CD8-positive, alpha-beta memory T cell (primary cell): ENCODE measurements at regions of chr7 and their contacts with region 1.

Region 1: GRCh38 chr7:92833024-92833765 is 3.2 kb downstream of the CDK6 start:
- DNase-seq: peak; percentile 80 to 90 (median 82)
- H3K4me3 ChIP-seq: peak overlapping the region; percentile 81
- H3K4me3 Mint-ChIP-seq: peak overlapping the region; percentile 94 to 100 (median 97)
- H3K27ac ChIP-seq: peak overlapping the region; percentile 73
- H3K27ac Mint-ChIP-seq: peak overlapping the region; percentile 65 to 98 (median 94)
- H3K4me1 ChIP-seq: peaks cover 39% of the 10 kb centered on the region
- H3K4me1 Mint-ChIP-seq: peaks cover 47 to 61% (median 57%) of the 10 kb centered on the region in 3 donors
- H3K27me3 ChIP-seq: no peaks in the 10 kb centered on the region
- H3K27me3 Mint-ChIP-seq: no peaks in the 10 kb centered on the region

Region 2: DNA sequence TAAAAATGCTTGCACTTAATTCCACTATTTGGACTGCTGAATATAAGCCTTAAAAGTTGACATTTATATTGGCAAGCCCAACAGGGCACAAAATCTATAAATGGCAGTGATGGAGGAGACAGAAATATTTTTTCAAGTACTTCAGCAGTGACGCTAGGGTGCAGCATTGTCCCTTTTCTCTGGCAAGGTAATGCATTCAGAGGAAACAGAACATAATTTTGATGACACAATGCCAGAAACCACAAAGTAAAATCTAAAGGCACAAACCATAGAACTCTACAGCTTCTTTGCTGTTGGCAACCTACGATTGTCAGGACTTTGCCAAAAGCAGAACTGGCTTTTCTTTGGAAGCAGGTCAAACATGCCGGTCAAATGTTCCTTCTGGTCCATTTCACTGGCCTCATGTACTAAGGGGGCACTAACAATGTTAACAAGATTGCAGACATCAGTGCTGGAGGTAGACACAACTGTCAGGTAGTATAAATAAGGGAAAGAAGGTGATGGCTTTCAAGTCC is 212.1 kb before region 1 on chr7:
- CTCF ChIA-PET with region 1: interaction called, 45 read pairs
- POLR2A ChIA-PET with region 1: interaction called, 3 read pairs
- DNase-seq: peak; percentile 61 to 82 (median 67)
- H3K4me3 ChIP-seq: no peak overlapping the region
- H3K4me3 Mint-ChIP-seq: peak overlapping the region in 1 of 7 donors; percentile 15
- H3K27ac ChIP-seq: no peak overlapping the region
- H3K27ac Mint-ChIP-seq: peak overlapping the region; percentile 1 to 96 (median 81)
- H3K4me1 ChIP-seq: peaks cover 26% of the 10 kb centered on the region
- H3K4me1 Mint-ChIP-seq: peaks cover 17 to 39% (median 36%) of the 10 kb centered on the region in 3 donors
- H3K27me3 ChIP-seq: no peaks in the 10 kb centered on the region
- H3K27me3 Mint-ChIP-seq: no peaks in the 10 kb centered on the region

Region 3: GRCh38 chr7:92691578-92691977 is 141.6 kb before region 1 on chr7:
- CTCF ChIA-PET with region 1: interaction called, 30 read pairs
- POLR2A ChIA-PET with region 1: no interaction called
- DNase-seq: peak in 2 of 5 donors; percentile 23 to 26
- H3K4me3 ChIP-seq: no peak overlapping the region
- H3K4me3 Mint-ChIP-seq: no peak overlapping the region
- H3K27ac ChIP-seq: no peak overlapping the region
- H3K27ac Mint-ChIP-seq: peak overlapping the region in 6 of 8 donors; percentile 0 to 71 (median 18)
- H3K4me1 ChIP-seq: peaks cover 20% of the 10 kb centered on the region
- H3K4me1 Mint-ChIP-seq: peaks cover 27 to 56% (median 52%) of the 10 kb centered on the region in 3 donors
- H3K27me3 ChIP-seq: no peaks in the 10 kb centered on the region
- H3K27me3 Mint-ChIP-seq: no peaks in the 10 kb centered on the region

Region 4: DNA sequence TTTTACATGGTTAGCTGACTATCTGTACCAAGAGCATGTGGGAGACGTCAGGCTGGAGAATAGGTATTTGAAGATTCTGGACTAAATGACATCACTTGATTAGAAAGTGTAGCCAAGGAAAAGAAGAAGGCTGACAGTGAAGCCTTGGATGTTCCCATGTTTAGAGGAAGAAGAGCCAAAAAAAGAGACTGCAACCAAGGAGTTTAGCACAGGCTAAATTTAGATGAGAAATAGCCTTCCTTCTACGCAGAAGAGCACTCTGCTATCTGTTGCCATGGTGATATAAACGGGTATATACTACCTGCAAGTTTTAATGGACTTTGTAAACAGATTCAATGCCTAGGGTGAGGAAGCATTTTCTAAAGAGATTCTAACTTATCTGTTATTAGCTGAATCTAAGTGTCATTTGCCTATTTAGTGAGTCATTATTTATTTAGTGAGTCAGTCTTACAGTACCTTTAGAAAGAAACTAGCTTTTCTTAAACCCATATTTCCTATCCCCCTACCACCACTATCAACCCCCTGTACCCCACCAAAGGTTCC is 66.7 kb before region 1 on chr7:
- CTCF ChIA-PET with region 1: interaction called, 10 read pairs
- POLR2A ChIA-PET with region 1: no interaction called
- DNase-seq: no peak
- H3K4me3 ChIP-seq: no peak overlapping the region
- H3K4me3 Mint-ChIP-seq: no peak overlapping the region
- H3K27ac ChIP-seq: no peak overlapping the region
- H3K27ac Mint-ChIP-seq: peak overlapping the region in 1 of 8 donors; percentile 23
- H3K4me1 ChIP-seq: no peaks in the 10 kb centered on the region
- H3K4me1 Mint-ChIP-seq: peaks cover 25 to 49% (median 47%) of the 10 kb centered on the region in 3 donors
- H3K27me3 ChIP-seq: no peaks in the 10 kb centered on the region
- H3K27me3 Mint-ChIP-seq: no peaks in the 10 kb centered on the region

Region 5: DNA sequence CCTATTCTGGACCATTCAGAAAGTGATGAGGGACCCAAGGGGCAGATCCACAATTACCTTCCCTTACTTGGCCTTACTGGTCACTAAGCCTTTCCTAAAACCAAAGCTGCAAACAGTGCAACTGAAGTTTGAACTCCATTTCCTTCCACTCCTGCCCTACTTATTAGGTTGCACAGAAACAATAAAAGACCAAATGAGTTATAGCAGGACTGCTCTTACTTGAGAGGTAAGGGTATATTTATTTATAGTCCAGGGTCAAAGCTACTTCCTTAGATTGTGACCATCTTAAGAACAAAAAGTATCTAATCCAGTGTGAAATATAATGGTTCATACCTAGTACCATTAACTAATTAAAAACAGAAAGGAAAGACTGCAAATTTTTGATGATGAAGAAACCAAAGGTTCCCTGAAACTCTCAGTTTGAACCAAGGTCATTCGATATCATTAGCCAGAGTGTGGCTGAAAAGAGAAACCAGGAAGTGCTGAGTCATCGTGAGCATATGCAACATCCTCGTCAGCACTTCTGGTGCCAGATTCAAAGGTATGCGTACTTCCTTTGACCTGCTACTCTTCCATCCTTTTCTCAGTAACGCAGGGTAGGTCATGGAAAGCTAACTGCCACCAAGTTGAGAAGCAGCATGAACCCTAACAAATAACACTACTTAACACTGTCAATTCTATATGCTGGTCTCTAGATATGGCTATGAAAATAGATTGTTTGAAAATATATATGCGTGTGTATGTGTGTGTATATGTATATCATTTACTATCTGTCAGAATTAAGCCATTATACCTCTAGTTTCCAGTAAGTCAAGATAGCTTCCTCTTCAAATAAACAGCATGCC is 23.6 kb before region 1 on chr7:
- CTCF ChIA-PET with region 1: interaction called, 46 read pairs
- POLR2A ChIA-PET with region 1: interaction called, 6 read pairs
- DNase-seq: peak; percentile 11 to 71 (median 44)
- H3K4me3 ChIP-seq: peak overlapping the region; percentile 24
- H3K4me3 Mint-ChIP-seq: peak overlapping the region; percentile 19 to 83 (median 72)
- H3K27ac ChIP-seq: peak overlapping the region; percentile 49
- H3K27ac Mint-ChIP-seq: peak overlapping the region; percentile 43 to 96 (median 86)
- H3K4me1 ChIP-seq: peaks cover 28% of the 10 kb centered on the region
- H3K4me1 Mint-ChIP-seq: peaks cover 43 to 63% (median 61%) of the 10 kb centered on the region in 3 donors
- H3K27me3 ChIP-seq: no peaks in the 10 kb centered on the region
- H3K27me3 Mint-ChIP-seq: no peaks in the 10 kb centered on the region

Region 6: DNA sequence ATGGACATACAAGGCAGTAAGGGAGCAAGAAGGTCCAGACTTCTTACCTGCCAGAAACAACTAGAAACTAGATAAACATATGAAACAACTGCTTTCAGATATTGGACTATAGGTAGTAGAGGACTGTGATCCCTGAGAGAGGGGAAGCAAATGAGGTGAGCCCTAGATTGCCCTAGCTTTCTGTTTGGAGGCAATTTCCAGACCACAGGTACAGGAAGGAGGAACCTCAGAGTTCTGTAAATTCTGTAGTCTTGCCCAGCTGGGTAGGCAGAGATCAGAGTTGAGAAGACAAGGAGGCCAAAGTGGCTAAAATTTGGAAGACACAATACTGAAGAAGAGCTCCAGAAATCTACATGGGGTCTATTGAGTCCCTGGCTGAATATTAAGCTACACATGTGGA is 17.8 kb before region 1 on chr7:
- CTCF ChIA-PET with region 1: interaction called, 46 read pairs
- POLR2A ChIA-PET with region 1: interaction called, 4 read pairs
- DNase-seq: no peak
- H3K4me3 ChIP-seq: no peak overlapping the region
- H3K4me3 Mint-ChIP-seq: no peak overlapping the region
- H3K27ac ChIP-seq: no peak overlapping the region
- H3K27ac Mint-ChIP-seq: peak overlapping the region in 3 of 8 donors; percentile 21 to 32 (median 29)
- H3K4me1 ChIP-seq: peaks cover 16% of the 10 kb centered on the region
- H3K4me1 Mint-ChIP-seq: peaks cover 55 to 77% (median 76%) of the 10 kb centered on the region in 3 donors
- H3K27me3 ChIP-seq: no peaks in the 10 kb centered on the region
- H3K27me3 Mint-ChIP-seq: no peaks in the 10 kb centered on the region

Region 7: DNA sequence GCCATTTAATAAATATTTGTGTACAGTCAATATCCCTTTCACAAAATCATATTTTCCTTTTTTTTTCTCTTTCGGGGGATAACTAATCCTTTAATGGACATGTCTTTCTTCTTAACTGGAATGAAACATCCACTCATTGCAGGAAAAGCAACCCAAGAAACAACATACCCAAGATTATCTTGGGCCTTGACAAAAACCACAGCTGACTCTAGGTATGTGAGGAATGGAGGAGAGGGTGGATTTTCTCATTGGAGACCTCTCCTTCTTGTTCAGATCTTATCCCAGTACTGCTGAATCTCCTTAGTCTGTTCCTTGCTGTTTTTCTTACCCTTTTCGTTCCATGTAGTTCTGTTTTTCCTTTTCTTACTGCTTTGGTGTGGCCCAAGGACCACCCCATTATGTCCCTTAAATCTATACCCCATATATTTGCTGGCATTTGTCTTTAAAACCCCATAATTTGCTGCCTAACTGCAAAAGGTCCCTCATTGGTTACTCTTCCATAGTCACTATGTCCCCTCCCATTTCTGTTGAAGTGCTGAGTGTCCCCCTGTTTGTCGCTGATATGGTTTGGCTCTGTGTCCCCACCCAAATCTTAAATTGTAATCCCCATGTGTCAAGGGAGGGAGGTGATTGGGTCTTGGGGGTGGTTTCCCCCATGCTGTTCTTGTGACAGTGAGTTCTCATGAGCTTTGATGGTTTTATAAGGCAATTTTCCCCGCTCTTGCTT is 10.0 kb after region 1 on chr7:
- CTCF ChIA-PET with region 1: interaction called, 14 read pairs
- POLR2A ChIA-PET with region 1: no interaction called
- DNase-seq: no peak
- H3K4me3 ChIP-seq: no peak overlapping the region
- H3K4me3 Mint-ChIP-seq: no peak overlapping the region
- H3K27ac ChIP-seq: no peak overlapping the region
- H3K27ac Mint-ChIP-seq: peak overlapping the region in 1 of 8 donors; percentile 48
- H3K4me1 ChIP-seq: no peaks in the 10 kb centered on the region
- H3K4me1 Mint-ChIP-seq: peaks cover 0 to 13% (median 0%) of the 10 kb centered on the region in 3 donors
- H3K27me3 ChIP-seq: no peaks in the 10 kb centered on the region
- H3K27me3 Mint-ChIP-seq: no peaks in the 10 kb centered on the region

Region 8: DNA sequence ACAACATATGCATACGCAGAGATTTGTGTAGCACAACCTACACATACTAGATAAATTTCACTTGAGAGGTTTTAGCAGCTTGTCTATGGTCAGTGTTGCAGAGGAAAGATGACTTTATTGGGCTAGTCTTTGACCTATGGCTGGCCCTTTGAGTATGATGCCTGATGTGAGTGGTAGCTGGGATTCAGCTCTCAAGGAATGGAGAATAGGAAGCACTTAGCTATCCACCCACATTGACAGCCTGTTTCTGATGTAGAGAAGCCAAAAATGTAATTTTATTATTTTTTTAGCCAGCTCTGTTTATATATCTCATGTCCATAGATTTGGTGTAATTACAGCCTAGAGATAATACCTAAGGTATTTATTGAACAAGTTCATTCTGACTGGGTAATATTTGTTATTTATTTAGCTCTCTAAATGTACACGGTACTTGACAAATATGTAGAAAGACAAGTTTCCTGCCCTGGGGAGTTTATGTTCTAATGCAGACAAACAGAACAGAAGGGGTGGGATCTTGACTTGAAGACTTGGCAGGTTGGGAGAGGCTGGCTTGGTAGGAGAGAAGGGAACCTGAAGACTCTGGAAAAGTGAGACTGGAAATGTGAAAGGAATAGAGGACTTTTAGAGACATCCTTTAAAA is 100.7 kb after region 1 on chr7:
- CTCF ChIA-PET with region 1: no interaction called
- POLR2A ChIA-PET with region 1: no interaction called
- DNase-seq: no peak
- H3K4me3 ChIP-seq: no peak overlapping the region
- H3K4me3 Mint-ChIP-seq: no peak overlapping the region
- H3K27ac ChIP-seq: no peak overlapping the region
- H3K27ac Mint-ChIP-seq: no peak overlapping the region
- H3K4me1 ChIP-seq: no peaks in the 10 kb centered on the region
- H3K4me1 Mint-ChIP-seq: no peaks in the 10 kb centered on the region
- H3K27me3 ChIP-seq: no peaks in the 10 kb centered on the region
- H3K27me3 Mint-ChIP-seq: peaks cover 6 to 8% of the 10 kb centered on the region in 2 donors

Region 9: GRCh38 chr7:93327006-93327633 is 493.9 kb after region 1 on chr7:
- CTCF ChIA-PET with region 1: no interaction called
- POLR2A ChIA-PET with region 1: no interaction called
- DNase-seq: no peak
- H3K4me3 ChIP-seq: no peak overlapping the region
- H3K4me3 Mint-ChIP-seq: no peak overlapping the region
- H3K27ac ChIP-seq: no peak overlapping the region
- H3K27ac Mint-ChIP-seq: no peak overlapping the region
- H3K4me1 ChIP-seq: no peaks in the 10 kb centered on the region
- H3K4me1 Mint-ChIP-seq: no peaks in the 10 kb centered on the region
- H3K27me3 ChIP-seq: no peaks in the 10 kb centered on the region
- H3K27me3 Mint-ChIP-seq: no peaks in the 10 kb centered on the region